ENCODE measurements at regions of chr14 and their contacts with region 1.

Region 1: DNA sequence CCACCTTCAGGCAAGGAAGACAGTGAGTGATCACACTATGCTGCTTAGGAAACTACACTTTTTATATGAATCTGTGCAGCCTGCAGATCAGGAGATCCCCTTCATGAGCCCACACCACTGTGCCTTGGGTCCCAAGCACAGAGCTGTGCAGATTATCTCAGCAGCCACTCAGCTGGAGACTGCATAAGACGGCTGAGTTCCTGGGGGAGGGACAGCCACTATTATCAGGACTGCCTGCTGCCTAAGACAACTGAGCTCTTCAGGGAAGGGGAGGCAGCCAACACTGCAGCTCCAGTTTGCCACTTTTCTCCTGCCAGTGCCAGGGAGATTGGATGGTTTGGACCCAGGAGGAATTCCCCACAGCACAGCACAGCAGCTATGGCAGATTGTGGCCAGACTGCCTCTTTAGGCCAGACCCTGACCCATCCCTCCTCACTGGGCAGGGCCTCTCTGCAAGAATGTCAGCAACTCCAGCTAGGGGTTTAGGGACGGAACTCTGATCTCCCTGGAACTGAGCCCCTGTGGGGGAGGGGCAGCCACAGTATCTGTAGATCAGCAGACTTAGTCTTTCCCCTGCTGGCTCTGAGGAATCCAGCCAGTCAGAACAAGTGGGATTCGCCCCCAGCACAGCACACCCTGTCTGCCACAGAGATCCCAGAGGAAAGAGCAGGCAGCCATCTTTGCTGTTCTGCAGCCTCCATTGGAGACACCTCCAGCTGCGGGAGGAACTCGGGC is 141.3 kb downstream of the KLHL28 start:
- DNase-seq: no peak
- ATAC-seq: no peak
- H3K4me3 ChIP-seq: no peak overlapping the region
- H3K4me3 Mint-ChIP-seq: no peak overlapping the region
- H3K27ac ChIP-seq: no peak overlapping the region
- H3K27ac Mint-ChIP-seq: no peak overlapping the region
- H3K4me1 ChIP-seq: no peaks in the 10 kb centered on the region
- H3K4me1 Mint-ChIP-seq: no peaks in the 10 kb centered on the region
- H3K27me3 ChIP-seq: no peaks in the 10 kb centered on the region
- H3K27me3 Mint-ChIP-seq: peaks cover 21% of the 10 kb centered on the region
- CTCF ChIP-seq: no peak

Region 2: GRCh38 chr14:44846232-44846824 is 25.9 kb after region 1 on chr14:
- CTCF ChIA-PET with region 1: interaction called, 10 read pairs
- POLR2A ChIA-PET with region 1: no interaction called
- intact Hi-C with region 1: no loop called
- DNase-seq: peak in 2 of 9 experiments; percentile 47 to 55
- ATAC-seq: peak; percentile 62
- H3K4me3 ChIP-seq: no peak overlapping the region
- H3K4me3 Mint-ChIP-seq: no peak overlapping the region
- H3K27ac ChIP-seq: no peak overlapping the region
- H3K27ac Mint-ChIP-seq: no peak overlapping the region
- H3K4me1 ChIP-seq: no peaks in the 10 kb centered on the region
- H3K4me1 Mint-ChIP-seq: peaks cover 5% of the 10 kb centered on the region
- H3K27me3 ChIP-seq: no peaks in the 10 kb centered on the region
- H3K27me3 Mint-ChIP-seq: peaks cover 16% of the 10 kb centered on the region
- CTCF ChIP-seq: peak; percentile 84

Region 3: GRCh38 chr14:44863271-44863670 is 42.9 kb after region 1 on chr14:
- CTCF ChIA-PET with region 1: no interaction called
- POLR2A ChIA-PET with region 1: no interaction called
- intact Hi-C with region 1: no loop called
- DNase-seq: no peak
- ATAC-seq: no peak
- H3K4me3 ChIP-seq: no peak overlapping the region
- H3K4me3 Mint-ChIP-seq: no peak overlapping the region
- H3K27ac ChIP-seq: no peak overlapping the region
- H3K27ac Mint-ChIP-seq: no peak overlapping the region
- H3K4me1 ChIP-seq: no peaks in the 10 kb centered on the region
- H3K4me1 Mint-ChIP-seq: no peaks in the 10 kb centered on the region
- H3K27me3 ChIP-seq: no peaks in the 10 kb centered on the region
- H3K27me3 Mint-ChIP-seq: peaks cover 4% of the 10 kb centered on the region
- CTCF ChIP-seq: no peak